Heart right ventricle (tissue), 16 donors: ENCODE measurements at regions of chr1 and their contacts with region 1.

Region 1: GRCh38 chr1:151327223-151327902 is at the start of gene PI4KB:
- DNase-seq: peak; percentile 78 to 97
- ATAC-seq: peak; percentile 97 to 98 (median 98)
- H3K4me3 ChIP-seq: peak within 1 kb of the TSS; percentile 67 to 95 (median 80)
- H3K27ac ChIP-seq: peak within 1 kb of the TSS; percentile 72 to 99 (median 96)
- H3K4me1 ChIP-seq: peaks cover 0 to 45% (median 29%) of the 10 kb centered on the region in 9 donors
- H3K27me3 ChIP-seq: no peaks in the 10 kb centered on the region
- CTCF ChIP-seq: peak in 1 of 9 donors; percentile 4
- total RNA-seq, gene PI4KB: 37.1 to 52.1 (median 42.5) TPM

Region 2: GRCh38 chr1:151281969-151282882 is 45.1 kb before region 1 on chr1 and contains the start of gene ZNF687:
- intact Hi-C with region 1: loop called in 2 of 10 experiments (anchors 1 to 5 kb)
- DNase-seq: peak; percentile 100
- ATAC-seq: peak; percentile 90 to 96 (median 94)
- H3K4me3 ChIP-seq: peak within 1 kb of the TSS; percentile 73 to 96 (median 86)
- H3K27ac ChIP-seq: peak within 1 kb of the TSS; percentile 94 to 99 (median 97)
- H3K4me1 ChIP-seq: peaks cover 0 to 36% (median 20%) of the 10 kb centered on the region in 9 donors
- H3K27me3 ChIP-seq: no peaks in the 10 kb centered on the region
- CTCF ChIP-seq: peak in 1 of 9 donors; percentile 13
- total RNA-seq, gene ZNF687: 10.4 to 15.1 (median 13.1) TPM

Region 3: DNA sequence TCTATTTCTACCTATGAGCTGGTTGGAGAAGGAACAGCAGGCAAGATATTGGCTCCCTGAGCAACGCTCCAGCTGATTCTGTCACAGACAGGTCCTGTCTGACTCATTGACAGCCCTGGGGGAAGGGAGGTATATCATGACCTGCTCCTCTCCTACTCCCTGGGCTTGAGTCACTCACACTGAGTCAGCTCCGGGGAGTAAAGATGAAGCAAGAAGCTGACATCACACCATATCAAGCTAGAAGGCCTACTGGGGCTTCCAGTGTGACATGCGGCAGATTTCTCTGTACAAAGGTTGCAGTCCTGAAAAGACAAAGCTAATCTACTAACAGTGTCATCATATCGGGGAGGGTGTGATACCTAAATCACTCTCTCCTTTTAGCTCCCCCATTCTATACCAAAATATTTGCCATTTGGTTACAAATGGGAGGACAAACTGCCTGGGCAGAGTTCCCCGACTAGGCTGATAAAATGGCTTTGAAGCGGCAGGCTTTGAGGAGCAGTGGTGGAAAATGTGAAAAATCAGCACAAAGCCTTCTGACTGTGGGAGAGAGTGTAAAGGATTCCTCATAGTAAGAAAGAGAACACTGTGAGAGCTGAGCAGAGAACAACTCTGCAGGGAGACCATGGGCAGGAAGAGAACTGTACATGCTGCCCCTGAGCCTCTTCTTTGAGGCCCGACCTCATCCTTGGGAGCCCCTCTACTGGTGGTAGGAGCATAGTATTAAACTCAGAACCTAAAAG is 15.6 kb before region 1 on chr1:
- intact Hi-C with region 1: loop called in 1 of 10 experiments (anchors 2 kb)
- DNase-seq: peak; percentile 33 to 74
- ATAC-seq: peak; percentile 75 to 95 (median 86)
- H3K4me3 ChIP-seq: no peak overlapping the region
- H3K27ac ChIP-seq: peak overlapping the region in 9 of 10 donors; percentile 58 to 91 (median 71)
- H3K4me1 ChIP-seq: peaks cover 38 to 82% (median 67%) of the 10 kb centered on the region in 9 donors
- H3K27me3 ChIP-seq: no peaks in the 10 kb centered on the region
- CTCF ChIP-seq: no peak

Region 4: DNA sequence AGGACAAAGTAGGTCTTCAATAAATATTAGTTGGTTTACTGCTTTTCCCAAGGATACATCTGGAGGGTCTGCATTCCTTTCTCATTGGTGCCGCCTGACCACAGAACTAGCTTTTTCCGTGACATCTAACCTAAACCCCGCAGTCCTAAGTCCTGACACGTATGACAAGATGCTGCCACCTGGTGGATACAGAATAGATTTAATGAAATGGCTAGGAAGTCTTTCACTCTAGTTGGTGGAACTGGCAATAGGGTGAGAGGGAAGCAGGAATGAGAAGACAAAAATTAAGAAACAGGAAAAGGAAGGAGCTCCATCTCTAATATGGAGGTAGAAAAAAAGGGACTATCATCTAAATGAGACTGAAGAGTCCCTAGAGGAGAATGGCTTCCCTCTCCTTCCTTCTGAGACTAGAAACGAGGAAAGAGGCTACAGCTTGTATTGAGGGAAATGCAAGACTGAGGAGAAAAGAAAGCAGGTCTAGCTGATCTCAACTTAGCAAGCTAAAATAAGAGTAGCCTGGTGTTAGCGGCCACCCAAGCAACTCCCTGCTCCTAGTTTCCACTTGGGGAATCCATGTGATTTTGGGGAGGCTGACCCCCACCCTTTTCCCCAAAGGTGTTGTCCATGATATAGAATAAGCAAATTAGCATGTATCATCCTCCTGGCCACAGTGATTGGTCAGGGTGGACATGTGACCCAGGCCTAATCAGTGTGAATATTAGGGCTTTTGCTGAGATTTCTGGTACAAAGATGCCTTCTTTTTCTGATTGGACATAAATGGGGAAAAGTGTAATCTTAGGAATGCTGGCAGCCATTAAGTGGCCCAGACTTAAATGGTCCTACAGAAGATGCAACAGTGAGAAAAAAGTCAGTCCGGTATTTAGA is 13.7 kb after region 1 on chr1:
- intact Hi-C with region 1: loop called in 2 of 10 experiments (anchors 2 kb)
- DNase-seq: peak in 1 of 2 donors; percentile 64
- ATAC-seq: peak; percentile 79 to 93 (median 88)
- H3K4me3 ChIP-seq: no peak overlapping the region
- H3K27ac ChIP-seq: peak overlapping the region in 2 of 10 donors; percentile 9 to 29
- H3K4me1 ChIP-seq: peaks cover 0 to 26% (median 7%) of the 10 kb centered on the region in 9 donors
- H3K27me3 ChIP-seq: no peaks in the 10 kb centered on the region
- CTCF ChIP-seq: peak; percentile 47 to 80 (median 75)

Region 5: GRCh38 chr1:151346769-151347522 is 19.6 kb after region 1 on chr1 and contains the start of gene RFX5:
- intact Hi-C with region 1: loop called in 1 of 10 experiments (anchors 2 kb)
- DNase-seq: peak; percentile 89 to 95
- ATAC-seq: peak; percentile 96 to 99 (median 98)
- H3K4me3 ChIP-seq: peak within 1 kb of the TSS; percentile 56 to 82 (median 68)
- H3K27ac ChIP-seq: peak within 1 kb of the TSS; percentile 16 to 95 (median 89)
- H3K4me1 ChIP-seq: peaks cover 0 to 25% (median 13%) of the 10 kb centered on the region in 9 donors
- H3K27me3 ChIP-seq: no peaks in the 10 kb centered on the region
- CTCF ChIP-seq: no peak
- total RNA-seq, gene RFX5: 12.6 to 38.4 (median 24.0) TPM